ENCODE measurements at regions of chr15 and their contacts with region 1.

Region 1: DNA sequence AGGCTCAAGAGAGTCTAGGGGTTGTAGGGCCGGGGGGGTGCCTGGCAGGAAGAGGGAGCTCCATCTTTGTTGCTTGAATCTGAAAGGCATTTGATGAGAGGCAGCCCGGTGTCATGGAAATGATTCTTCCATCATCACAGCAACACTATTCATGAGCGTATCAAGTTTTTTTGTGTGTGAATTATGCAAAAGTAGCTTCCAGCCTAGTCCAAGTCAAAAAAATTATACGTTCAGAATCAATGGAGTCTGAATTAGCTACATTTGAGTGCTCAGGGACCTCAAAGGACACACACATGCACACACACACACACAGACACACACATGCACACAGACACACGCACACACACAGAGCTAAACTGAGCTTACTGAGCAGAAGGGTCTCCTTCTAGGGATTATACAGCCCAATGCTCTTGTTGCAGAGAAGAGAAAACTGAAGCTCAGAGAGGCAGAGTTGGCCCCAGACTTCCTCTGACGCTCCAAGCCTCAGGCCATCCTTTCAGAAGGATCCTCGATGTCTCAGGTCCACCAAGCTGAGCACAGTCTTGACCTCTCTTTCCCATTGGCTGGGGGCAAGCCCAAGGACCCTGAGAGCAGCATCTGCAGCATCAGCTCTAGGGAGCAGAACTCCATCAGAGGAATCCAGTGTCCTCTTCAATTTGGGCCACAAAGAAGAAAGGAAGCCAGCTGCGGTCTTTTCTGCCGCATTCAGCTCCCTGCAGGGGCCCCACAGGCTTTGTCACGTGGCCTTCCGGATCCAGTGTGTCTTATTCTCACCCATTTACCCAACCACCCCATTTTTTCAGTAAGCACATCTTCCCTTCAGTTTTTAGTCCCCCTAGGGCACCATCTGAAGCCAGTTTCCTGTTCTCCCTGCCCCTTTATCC is 228.0 kb downstream of the UACA start:
- DNase-seq: peak; percentile 89
- ATAC-seq: peak; percentile 88
- H3K4me3 Mint-ChIP-seq: peak overlapping the region; percentile 80
- H3K27ac Mint-ChIP-seq: peak overlapping the region; percentile 96
- H3K4me1 Mint-ChIP-seq: peaks cover 47% of the 10 kb centered on the region
- H3K27me3 Mint-ChIP-seq: peaks cover 5% of the 10 kb centered on the region

Region 2: GRCh38 chr15:70504299-70504951 is 30.9 kb before region 1 on chr15:
- CTCF ChIA-PET with region 1: interaction called, 13 read pairs
- POLR2A ChIA-PET with region 1: interaction called, 4 read pairs
- DNase-seq: no peak
- ATAC-seq: peak; percentile 40
- H3K4me3 Mint-ChIP-seq: no peak overlapping the region
- H3K27ac Mint-ChIP-seq: peak overlapping the region; percentile 69
- H3K4me1 Mint-ChIP-seq: peaks cover 69% of the 10 kb centered on the region
- H3K27me3 Mint-ChIP-seq: peaks cover 7% of the 10 kb centered on the region

Region 3: GRCh38 chr15:70559265-70560239 is 24.2 kb after region 1 on chr15:
- CTCF ChIA-PET with region 1: interaction called, 13 read pairs
- POLR2A ChIA-PET with region 1: interaction called, 4 read pairs
- DNase-seq: peak; percentile 85
- ATAC-seq: peak; percentile 98
- H3K4me3 Mint-ChIP-seq: peak overlapping the region; percentile 16
- H3K27ac Mint-ChIP-seq: no peak overlapping the region
- H3K4me1 Mint-ChIP-seq: peaks cover 2% of the 10 kb centered on the region
- H3K27me3 Mint-ChIP-seq: peaks cover 14% of the 10 kb centered on the region

Measured in activated CD8-positive, alpha-beta T cell treated with anti-CD3 and anti-CD28 coated beads, Interleukin-2, amount 10 ng/mL, durations not matched to agents 7 days and 5 days (primary cell).